ENCODE measurements at regions of chr5 and their contacts with region 1.

Region 1: DNA sequence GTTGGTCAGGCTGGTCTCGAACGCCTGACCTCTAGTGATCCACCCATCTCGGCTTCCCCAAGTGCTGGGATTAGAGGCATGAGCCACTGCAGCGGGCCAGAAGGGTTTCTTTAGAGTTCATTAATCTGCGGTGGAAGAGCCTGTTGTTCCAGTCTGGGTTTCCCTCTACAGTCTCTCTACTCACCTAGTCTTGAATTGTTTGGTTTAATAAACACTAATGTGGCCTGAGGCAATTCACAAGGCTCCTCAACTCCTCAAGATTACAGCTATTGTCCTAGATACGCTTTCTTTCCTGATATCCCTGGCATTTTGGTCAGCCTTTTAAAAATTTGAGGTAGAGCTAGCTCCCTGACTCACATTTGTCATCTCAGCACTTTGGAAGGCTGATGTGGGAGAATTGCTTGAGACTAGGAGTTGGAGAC is 4.5 kb upstream of the SAR1B start:
- DNase-seq: peak; percentile 77 to 78
- H3K4me3 ChIP-seq: no peak overlapping the region
- H3K4me3 Mint-ChIP-seq: peak overlapping the region; percentile 29
- H3K27ac Mint-ChIP-seq: peak overlapping the region; percentile 87
- H3K4me1 ChIP-seq: peaks cover 37% of the 10 kb centered on the region
- H3K4me1 Mint-ChIP-seq: peaks cover 29% of the 10 kb centered on the region
- H3K27me3 ChIP-seq: no peaks in the 10 kb centered on the region
- H3K27me3 Mint-ChIP-seq: no peaks in the 10 kb centered on the region
- CTCF ChIP-seq: no peak

Region 2: GRCh38 chr5:134477462-134478250 is 159.5 kb before region 1 on chr5:
- CTCF ChIA-PET with region 1: no interaction called
- POLR2A ChIA-PET with region 1: no interaction called
- intact Hi-C with region 1: no loop called
- DNase-seq: peak in 1 of 2 experiments; percentile 14
- H3K4me3 ChIP-seq: no peak overlapping the region
- H3K4me3 Mint-ChIP-seq: no peak overlapping the region
- H3K27ac Mint-ChIP-seq: no peak overlapping the region
- H3K4me1 ChIP-seq: no peaks in the 10 kb centered on the region
- H3K4me1 Mint-ChIP-seq: no peaks in the 10 kb centered on the region
- H3K27me3 ChIP-seq: no peaks in the 10 kb centered on the region
- H3K27me3 Mint-ChIP-seq: no peaks in the 10 kb centered on the region
- CTCF ChIP-seq: no peak

Region 3: GRCh38 chr5:134648425-134649162 is 11.4 kb after region 1 on chr5 and contains the start of gene SEC24A:
- CTCF ChIA-PET with region 1: interaction called, 4 read pairs
- POLR2A ChIA-PET with region 1: interaction called, 9 read pairs
- intact Hi-C with region 1: loop called (anchors 1 kb)
- DNase-seq: peak; percentile 94 to 95
- H3K4me3 ChIP-seq: peak within 1 kb of the TSS; percentile 85
- H3K4me3 Mint-ChIP-seq: peak within 1 kb of the TSS; percentile 82
- H3K27ac Mint-ChIP-seq: peak within 1 kb of the TSS; percentile 90
- H3K4me1 ChIP-seq: no peaks in the 10 kb centered on the region; the same call in 1 of the 2 replicates
- H3K4me1 Mint-ChIP-seq: no peaks in the 10 kb centered on the region
- H3K27me3 ChIP-seq: no peaks in the 10 kb centered on the region
- H3K27me3 Mint-ChIP-seq: no peaks in the 10 kb centered on the region
- CTCF ChIP-seq: no peak
- total RNA-seq, gene SEC24A: 47.4 and 49.9 TPM in 2 replicates